Colonic mucosa (tissue), 4 donors: ENCODE measurements at regions of chr7 and their contacts with region 1.

Region 1: GRCh38 chr7:29189743-29190201 is 4.8 kb upstream of the CHN2 start:
- DNase-seq: peak; percentile 81
- H3K4me3 ChIP-seq: no peak overlapping the region
- H3K27ac ChIP-seq: no peak overlapping the region
- H3K4me1 ChIP-seq: no peaks in the 10 kb centered on the region
- H3K27me3 ChIP-seq: no peaks in the 10 kb centered on the region
- CTCF ChIP-seq: peak; percentile 83

Region 2: GRCh38 chr7:29126804-29127203 is 63.0 kb before region 1 on chr7:
- intact Hi-C with region 1: no loop called
- DNase-seq: no peak
- H3K4me3 ChIP-seq: no peak overlapping the region
- H3K27ac ChIP-seq: no peak overlapping the region
- H3K4me1 ChIP-seq: no peaks in the 10 kb centered on the region
- H3K27me3 ChIP-seq: no peaks in the 10 kb centered on the region
- CTCF ChIP-seq: no peak

Region 3: DNA sequence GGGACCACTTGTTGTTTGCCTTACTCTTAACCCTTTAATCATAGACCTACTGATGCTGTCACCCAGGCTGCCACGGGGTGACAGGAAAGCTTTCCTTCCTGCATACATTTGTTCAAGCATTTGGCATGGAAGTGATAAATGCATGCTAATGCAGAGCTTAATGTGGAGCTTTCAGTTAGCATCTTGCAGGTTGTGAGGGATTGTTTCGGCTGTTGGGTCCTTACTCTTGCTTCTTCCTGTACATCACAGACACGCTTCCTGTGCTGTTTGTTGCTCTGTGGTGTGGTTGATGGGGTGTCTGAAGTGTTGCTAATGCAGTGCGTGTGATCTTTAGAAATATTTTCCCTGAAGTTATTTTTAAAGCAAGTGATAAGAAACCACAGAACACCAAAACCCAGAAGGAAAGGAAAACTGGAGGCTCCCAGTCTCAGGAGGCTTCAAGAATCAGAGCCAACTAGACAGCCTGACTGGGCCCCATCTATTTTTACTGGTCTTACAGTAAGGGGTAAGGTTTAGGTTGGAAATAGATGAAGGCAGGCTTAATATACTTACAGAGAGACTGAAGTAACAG is 147.9 kb after region 1 on chr7:
- intact Hi-C with region 1: loop called (anchors 10 kb)
- DNase-seq: no peak
- H3K4me3 ChIP-seq: no peak overlapping the region
- H3K27ac ChIP-seq: no peak overlapping the region
- H3K4me1 ChIP-seq: no peaks in the 10 kb centered on the region
- H3K27me3 ChIP-seq: no peaks in the 10 kb centered on the region
- CTCF ChIP-seq: no peak

Region 4: DNA sequence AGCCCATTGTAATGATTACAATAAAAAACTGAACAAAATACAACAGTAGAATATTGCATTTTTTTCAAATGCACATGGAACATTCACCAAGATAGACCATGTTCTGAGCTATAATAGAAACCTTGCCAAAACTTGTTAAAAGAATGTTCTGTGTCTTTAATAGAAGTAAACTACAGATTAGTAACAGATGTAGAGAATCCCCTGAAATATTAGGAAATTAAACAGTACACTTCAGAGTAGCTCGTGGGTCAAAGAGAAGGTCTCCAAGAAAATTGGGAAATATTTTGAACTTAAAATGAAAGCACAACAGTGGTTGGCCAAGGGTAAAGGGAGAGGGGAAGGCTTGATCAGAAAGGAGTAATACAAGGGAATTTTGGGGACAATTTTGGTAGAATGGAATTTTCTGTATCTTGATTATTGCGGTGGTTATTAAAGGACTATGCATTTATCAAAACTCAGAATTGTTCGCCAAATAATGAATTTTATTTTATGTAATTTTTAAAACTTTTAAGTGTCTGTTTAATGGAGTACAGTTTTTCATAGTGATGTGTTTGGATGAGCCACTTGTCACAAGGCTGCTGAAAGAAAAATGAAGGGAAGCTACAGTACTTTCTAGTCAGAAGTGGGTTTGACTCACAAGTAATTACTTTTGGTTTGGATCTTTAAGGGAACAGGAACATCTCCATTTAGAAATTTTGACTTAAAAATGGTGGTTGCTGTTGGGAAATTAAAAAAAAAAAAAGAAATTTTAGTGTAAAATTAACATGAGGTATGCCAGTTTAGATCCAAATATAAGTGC is 848.6 kb after region 1 on chr7:
- intact Hi-C with region 1: no loop called
- DNase-seq: no peak
- H3K4me3 ChIP-seq: no peak overlapping the region
- H3K27ac ChIP-seq: no peak overlapping the region
- H3K4me1 ChIP-seq: no peaks in the 10 kb centered on the region
- H3K27me3 ChIP-seq: no peaks in the 10 kb centered on the region
- CTCF ChIP-seq: no peak